PC-3 (cell line): ENCODE measurements at regions of chr12 and their contacts with region 1.

Region 1: GRCh38 chr12:132560614-132561426 is 49.6 kb downstream of the LRCOL1 start:
- DNase-seq: peak; percentile 80
- ATAC-seq: peak; percentile 53
- H3K4me3 ChIP-seq: peak overlapping the region; percentile 96
- H3K27ac ChIP-seq: peak overlapping the region; percentile 46
- H3K4me1 ChIP-seq: 0 out of 2 replicates have a peak, but pooled peaks cover 4% of the 10 kb centered on the region
- H3K27me3 ChIP-seq: no peaks in the 10 kb centered on the region
- CTCF ChIP-seq: peak; percentile 96

Region 2: GRCh38 chr12:132490481-132491348 is 70.1 kb before region 1 on chr12:
- CTCF ChIA-PET with region 1: no interaction called
- POLR2A ChIA-PET with region 1: no interaction called
- intact Hi-C with region 1: loop called (anchors 2 kb)
- DNase-seq: no peak
- ATAC-seq: peak; percentile 4; the same call in 1 of the 2 replicates
- H3K4me3 ChIP-seq: peak overlapping the region; percentile 77
- H3K27ac ChIP-seq: no peak overlapping the region
- H3K4me1 ChIP-seq: peaks cover 41% of the 10 kb centered on the region
- H3K27me3 ChIP-seq: no peaks in the 10 kb centered on the region
- CTCF ChIP-seq: no peak

Region 3: DNA sequence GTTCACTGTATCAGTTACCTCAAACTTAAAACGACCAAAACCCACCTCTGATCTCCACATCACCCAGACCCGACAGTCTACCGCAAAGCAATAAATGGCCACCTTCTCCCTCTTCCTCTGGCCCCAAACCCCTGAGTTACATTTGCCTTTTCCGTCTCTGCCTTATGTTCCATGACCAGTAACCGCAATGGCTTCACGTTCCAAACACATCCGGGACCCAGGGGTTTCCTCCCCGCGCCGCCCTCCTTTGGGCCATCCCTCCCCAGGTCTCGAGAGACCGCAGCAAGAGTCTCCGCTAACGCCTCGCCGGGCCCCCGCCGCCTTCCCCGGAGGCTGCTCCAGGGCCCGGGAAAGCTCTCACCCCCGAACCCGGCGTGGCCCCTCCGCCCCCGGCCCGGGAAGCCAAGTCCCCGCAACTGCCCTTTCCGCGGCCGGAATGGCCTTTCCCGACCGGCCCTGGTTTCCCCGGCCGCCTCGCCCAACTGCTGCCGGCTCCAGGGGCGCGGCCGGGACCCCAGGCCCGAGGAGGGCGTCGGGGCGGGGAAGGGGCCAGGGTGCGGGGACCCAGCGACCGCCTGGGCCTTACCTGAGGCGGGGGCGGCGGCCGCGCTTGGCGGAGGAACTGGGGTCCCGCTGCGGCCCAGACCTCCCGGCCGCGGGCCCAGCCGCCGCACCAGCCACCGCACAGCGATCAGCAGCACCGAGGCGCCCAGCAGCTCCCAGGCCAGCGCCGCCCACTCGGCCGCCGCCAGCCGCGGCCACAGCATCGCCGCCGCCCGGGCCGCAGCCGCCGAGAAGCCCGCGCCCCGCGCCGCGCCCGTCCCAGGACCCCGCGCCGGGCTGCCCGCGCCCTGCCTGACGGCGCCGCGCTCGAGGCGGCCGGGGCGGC is 200.5 kb after region 1 on chr12 and contains the start of gene ANKLE2:
- CTCF ChIA-PET with region 1: no interaction called
- POLR2A ChIA-PET with region 1: no interaction called
- intact Hi-C with region 1: no loop called
- DNase-seq: peak; percentile 60
- ATAC-seq: peak; percentile 42
- H3K4me3 ChIP-seq: peak within 1 kb of the TSS; percentile 77
- H3K27ac ChIP-seq: peak within 1 kb of the TSS; percentile 86
- H3K4me1 ChIP-seq: peaks cover 15% of the 10 kb centered on the region
- H3K27me3 ChIP-seq: no peaks in the 10 kb centered on the region
- CTCF ChIP-seq: no peak
- total RNA-seq, gene ANKLE2: 85.2 and 85.9 TPM in 2 replicates